WTC11 (cell line): ENCODE measurements at regions of chr9 and their contacts with region 1.

Region 1: GRCh38 chr9:89623925-89624420 is 19.2 kb downstream of the GADD45G start:
- DNase-seq: no peak
- ATAC-seq: no peak
- H3K4me3 Mint-ChIP-seq: no peak overlapping the region
- H3K27ac Mint-ChIP-seq: no peak overlapping the region
- H3K4me1 Mint-ChIP-seq: peaks cover 26% of the 10 kb centered on the region
- H3K27me3 Mint-ChIP-seq: no peaks in the 10 kb centered on the region; the same call in 1 of the 2 replicates
- CTCF ChIP-seq: no peak

Region 2: GRCh38 chr9:89608651-89609345 is 15.2 kb before region 1 on chr9:
- CTCF ChIA-PET with region 1: interaction called, 46 read pairs
- POLR2A ChIA-PET with region 1: interaction called, 11 read pairs
- DNase-seq: no peak
- ATAC-seq: no peak
- H3K4me3 Mint-ChIP-seq: no peak overlapping the region
- H3K27ac Mint-ChIP-seq: no peak overlapping the region
- H3K4me1 Mint-ChIP-seq: peaks cover 26% of the 10 kb centered on the region
- H3K27me3 Mint-ChIP-seq: peaks cover 45% of the 10 kb centered on the region
- CTCF ChIP-seq: no peak